ENCODE measurements at regions of chrX and their contacts with region 1.

Region 1: GRCh38 chrX:8879750-8880149 is 78.6 kb upstream of the FAM9A start:
- DNase-seq: peak in 1 of 2 donors; percentile 41
- ATAC-seq: peak in 2 of 3 donors; percentile 29 to 67
- H3K4me3 ChIP-seq: no peak overlapping the region
- H3K4me3 Mint-ChIP-seq: no peak overlapping the region
- H3K27ac ChIP-seq: no peak overlapping the region
- H3K27ac Mint-ChIP-seq: no peak overlapping the region
- H3K4me1 ChIP-seq: no peaks in the 10 kb centered on the region
- H3K4me1 Mint-ChIP-seq: no peaks in the 10 kb centered on the region
- H3K27me3 ChIP-seq: no peaks in the 10 kb centered on the region
- H3K27me3 Mint-ChIP-seq: peaks cover 12 to 31% of the 10 kb centered on the region in 2 donors
- CTCF ChIP-seq: peak; percentile 55

Region 2: DNA sequence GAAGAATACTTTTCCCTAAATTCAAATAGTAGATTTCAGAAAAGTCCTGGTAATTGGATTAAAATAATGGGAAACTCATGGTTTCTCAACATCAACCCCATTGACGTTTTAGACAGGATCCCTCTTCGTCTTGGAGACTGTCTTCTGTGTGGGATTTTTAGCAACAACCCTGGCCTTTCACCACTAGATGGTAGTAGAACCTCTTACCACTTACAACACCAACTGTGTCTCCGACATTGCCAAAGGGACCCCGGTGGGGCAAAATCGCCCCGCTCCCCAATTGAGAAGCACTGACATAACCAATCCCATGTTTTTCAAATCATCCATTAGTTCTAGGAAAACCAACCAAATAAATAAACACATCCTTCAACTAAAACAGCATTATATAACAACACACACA is 130.9 kb before region 1 on chrX:
- intact Hi-C with region 1: loop called (anchors 5 kb)
- DNase-seq: peak in 1 of 2 donors; percentile 47
- ATAC-seq: peak in 2 of 3 donors; percentile 58 to 71
- H3K4me3 ChIP-seq: no peak overlapping the region
- H3K4me3 Mint-ChIP-seq: no peak overlapping the region
- H3K27ac ChIP-seq: no peak overlapping the region
- H3K27ac Mint-ChIP-seq: no peak overlapping the region
- H3K4me1 ChIP-seq: no peaks in the 10 kb centered on the region
- H3K4me1 Mint-ChIP-seq: peaks cover 0 to 5% of the 10 kb centered on the region in 2 donors
- H3K27me3 ChIP-seq: no peaks in the 10 kb centered on the region
- H3K27me3 Mint-ChIP-seq: peaks cover 4 to 8% of the 10 kb centered on the region in 2 donors
- CTCF ChIP-seq: peak; percentile 30

Region 3: DNA sequence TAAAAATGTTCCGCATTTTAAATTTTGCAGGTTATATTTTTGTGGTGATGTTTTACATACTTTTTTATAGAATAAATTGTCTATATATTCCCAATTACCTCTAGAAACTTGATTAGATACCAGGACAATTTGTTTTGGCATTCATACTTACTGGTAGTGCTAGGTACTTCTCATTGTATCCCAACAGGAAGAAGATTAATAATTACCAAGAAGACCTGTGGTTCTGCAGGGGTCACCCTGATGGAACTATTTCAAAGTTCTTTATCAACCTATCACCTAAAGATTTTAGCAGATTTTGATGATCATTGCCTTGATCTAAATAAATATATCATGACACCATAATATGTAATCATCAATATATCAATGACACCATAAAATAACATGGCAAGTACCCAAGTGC is 56.1 kb before region 1 on chrX:
- intact Hi-C with region 1: no loop called
- DNase-seq: no peak
- ATAC-seq: no peak
- H3K4me3 ChIP-seq: no peak overlapping the region
- H3K4me3 Mint-ChIP-seq: no peak overlapping the region
- H3K27ac ChIP-seq: no peak overlapping the region
- H3K27ac Mint-ChIP-seq: no peak overlapping the region
- H3K4me1 ChIP-seq: no peaks in the 10 kb centered on the region
- H3K4me1 Mint-ChIP-seq: no peaks in the 10 kb centered on the region
- H3K27me3 ChIP-seq: no peaks in the 10 kb centered on the region
- H3K27me3 Mint-ChIP-seq: peaks cover 15% of the 10 kb centered on the region in 2 donors
- CTCF ChIP-seq: no peak

Region 4: GRCh38 chrX:9102956-9103355 is 223.2 kb after region 1 on chrX:
- intact Hi-C with region 1: no loop called
- DNase-seq: no peak
- ATAC-seq: no peak
- H3K4me3 ChIP-seq: no peak overlapping the region
- H3K4me3 Mint-ChIP-seq: no peak overlapping the region
- H3K27ac ChIP-seq: no peak overlapping the region
- H3K27ac Mint-ChIP-seq: no peak overlapping the region
- H3K4me1 ChIP-seq: no peaks in the 10 kb centered on the region
- H3K4me1 Mint-ChIP-seq: no peaks in the 10 kb centered on the region
- H3K27me3 ChIP-seq: no peaks in the 10 kb centered on the region
- H3K27me3 Mint-ChIP-seq: peaks cover 0 to 8% of the 10 kb centered on the region in 2 donors
- CTCF ChIP-seq: no peak